SK-N-SH (cell line): ENCODE measurements at regions of chr20 and their contacts with region 1.

Region 1: GRCh38 chr20:39874049-39874888 is 814.8 kb downstream of the MAFB start:
- DNase-seq: peak; percentile 53
- H3K4me3 ChIP-seq: peak overlapping the region in 1 of 2 experiments; percentile 9; a peak in 1 of 4 replicates
- H3K27ac ChIP-seq: no peak overlapping the region
- H3K4me1 ChIP-seq: peaks cover 0 to 12% of the 10 kb centered on the region in 2 experiments; a peak in 2 of 4 replicates
- H3K27me3 ChIP-seq: no peaks in the 10 kb centered on the region
- CTCF ChIP-seq: peak; percentile 75
- EP300 ChIP-seq: no peak
- RAD21 ChIP-seq: peak; percentile 92

Region 2: GRCh38 chr20:39214828-39215227 is 659.4 kb before region 1 on chr20:
- CTCF ChIA-PET with region 1: interaction called, 13 read pairs
- POLR2A ChIA-PET with region 1: no interaction called
- DNase-seq: peak; percentile 42
- H3K4me3 ChIP-seq: no peak overlapping the region
- H3K27ac ChIP-seq: no peak overlapping the region
- H3K4me1 ChIP-seq: peaks cover 0 to 17% of the 10 kb centered on the region in 2 experiments; a peak in 2 of 4 replicates
- H3K27me3 ChIP-seq: no peaks in the 10 kb centered on the region
- CTCF ChIP-seq: no peak
- EP300 ChIP-seq: no peak
- RAD21 ChIP-seq: peak; percentile 57

Region 3: DNA sequence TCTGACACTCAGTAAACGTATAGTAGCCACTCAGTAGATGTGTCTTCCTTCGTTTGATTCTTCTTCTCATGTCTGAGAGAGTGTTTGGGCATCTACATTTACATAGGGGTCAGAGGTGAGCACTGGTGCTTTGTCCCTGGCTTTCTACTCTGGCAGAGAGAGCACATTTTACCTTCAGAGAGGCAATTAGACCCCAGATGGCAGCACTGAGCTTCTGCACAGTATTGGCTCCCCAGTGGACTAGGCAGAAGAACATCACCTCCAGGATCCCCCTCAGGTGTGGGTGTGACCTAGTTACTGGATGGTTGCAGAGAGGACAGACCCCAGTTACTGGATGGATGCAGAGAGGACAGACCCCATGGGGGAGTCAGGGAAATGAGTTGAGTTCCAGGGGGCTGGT is 585.0 kb before region 1 on chr20:
- CTCF ChIA-PET with region 1: interaction called, 11 read pairs
- POLR2A ChIA-PET with region 1: no interaction called
- DNase-seq: no peak
- H3K4me3 ChIP-seq: no peak overlapping the region
- H3K27ac ChIP-seq: no peak overlapping the region
- H3K4me1 ChIP-seq: no peaks in the 10 kb centered on the region
- H3K27me3 ChIP-seq: no peaks in the 10 kb centered on the region
- CTCF ChIP-seq: no peak
- EP300 ChIP-seq: no peak
- RAD21 ChIP-seq: peak; percentile 49

Region 4: GRCh38 chr20:39853636-39854035 is 20.6 kb before region 1 on chr20:
- CTCF ChIA-PET with region 1: interaction called, 17 read pairs
- POLR2A ChIA-PET with region 1: no interaction called
- DNase-seq: no peak
- H3K4me3 ChIP-seq: no peak overlapping the region
- H3K27ac ChIP-seq: peak overlapping the region in 1 of 2 experiments; percentile 51; a peak in 2 of 4 replicates
- H3K4me1 ChIP-seq: peaks cover 28 to 50% of the 10 kb centered on the region in 2 experiments
- H3K27me3 ChIP-seq: no peaks in the 10 kb centered on the region
- CTCF ChIP-seq: no peak
- EP300 ChIP-seq: no peak
- RAD21 ChIP-seq: no peak

Region 5: GRCh38 chr20:39885975-39886649 is 11.8 kb after region 1 on chr20:
- CTCF ChIA-PET with region 1: interaction called, 10 read pairs
- POLR2A ChIA-PET with region 1: no interaction called
- DNase-seq: peak; percentile 29
- H3K4me3 ChIP-seq: no peak overlapping the region
- H3K27ac ChIP-seq: no peak overlapping the region
- H3K4me1 ChIP-seq: no peaks in the 10 kb centered on the region; a peak in 1 of 4 replicates
- H3K27me3 ChIP-seq: no peaks in the 10 kb centered on the region
- CTCF ChIP-seq: peak; percentile 61
- EP300 ChIP-seq: no peak
- RAD21 ChIP-seq: peak; percentile 79